Heart left ventricle (tissue), 16 donors: ENCODE measurements at regions of chr14 and their contacts with region 1.

Region 1: DNA sequence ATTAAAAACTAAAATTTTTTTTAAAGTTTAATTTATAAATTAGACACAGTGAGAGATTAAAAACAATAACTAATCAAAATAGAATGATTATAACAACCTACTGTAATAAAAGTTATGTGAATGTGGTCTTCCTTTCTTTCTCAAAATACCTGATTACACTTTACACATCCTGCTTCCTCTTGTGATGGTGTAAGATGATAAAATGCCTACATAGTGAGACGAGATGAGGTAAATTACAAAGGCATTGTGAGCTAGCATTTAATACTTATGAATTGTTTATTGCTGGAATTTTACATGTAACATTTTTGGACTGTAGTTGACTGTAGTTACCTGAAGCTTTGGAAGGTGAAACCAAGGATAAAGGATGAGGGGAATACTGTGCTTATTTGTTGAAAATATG is 94.2 kb upstream of the CLEC14A start:
- DNase-seq: no peak
- ATAC-seq: no peak
- H3K4me3 ChIP-seq: no peak overlapping the region
- H3K27ac ChIP-seq: no peak overlapping the region
- H3K4me1 ChIP-seq: no peaks in the 10 kb centered on the region
- H3K27me3 ChIP-seq: no peaks in the 10 kb centered on the region
- CTCF ChIP-seq: no peak
- POLR2A ChIP-seq: no peak

Region 2: DNA sequence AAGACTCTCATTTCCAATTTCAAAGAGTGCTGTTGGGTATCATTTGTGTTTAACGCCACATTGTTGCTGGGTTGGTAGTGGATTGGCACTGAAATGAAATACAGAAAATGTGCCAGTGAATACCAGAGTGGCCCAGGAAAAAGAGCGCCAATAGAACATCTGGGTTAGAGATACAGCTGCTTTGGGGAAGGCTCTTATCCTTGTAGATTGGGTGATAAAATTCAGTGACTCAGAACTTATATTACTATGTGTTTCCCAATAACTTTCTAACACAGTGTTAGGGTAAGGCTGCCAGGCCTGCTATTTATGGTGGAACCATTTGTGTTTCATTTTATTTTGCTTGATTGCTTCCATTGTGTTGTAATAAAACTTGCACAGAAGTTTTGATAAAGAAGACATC is 310.6 kb before region 1 on chr14:
- intact Hi-C with region 1: no loop called
- DNase-seq: no peak
- ATAC-seq: no peak
- H3K4me3 ChIP-seq: no peak overlapping the region
- H3K27ac ChIP-seq: no peak overlapping the region
- H3K4me1 ChIP-seq: no peaks in the 10 kb centered on the region
- H3K27me3 ChIP-seq: no peaks in the 10 kb centered on the region
- CTCF ChIP-seq: no peak
- POLR2A ChIP-seq: no peak

Region 3: DNA sequence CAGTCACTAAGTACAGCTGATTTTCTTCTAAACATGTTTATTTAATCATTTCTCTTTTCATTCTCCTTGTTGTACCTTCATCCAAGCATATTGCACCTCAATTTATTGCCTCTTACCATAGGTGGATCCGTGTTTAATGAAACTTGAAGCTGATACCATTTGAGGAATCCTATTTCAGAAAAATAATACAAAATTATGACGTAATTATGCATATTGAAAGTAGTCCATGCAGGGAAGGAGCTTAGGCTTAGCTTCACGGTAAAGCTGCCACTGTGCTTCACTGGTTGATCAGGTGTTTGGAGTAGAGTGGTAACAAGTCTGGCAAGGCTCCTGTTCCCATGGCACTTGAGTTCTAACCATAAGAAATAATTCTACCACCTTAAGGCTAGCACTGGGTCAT is 33.2 kb before region 1 on chr14:
- intact Hi-C with region 1: loop called in 1 of 10 experiments (anchors 5 kb)
- DNase-seq: no peak
- ATAC-seq: no peak
- H3K4me3 ChIP-seq: no peak overlapping the region
- H3K27ac ChIP-seq: no peak overlapping the region
- H3K4me1 ChIP-seq: peaks cover 0 to 4% (median 0%) of the 10 kb centered on the region in 12 donors
- H3K27me3 ChIP-seq: no peaks in the 10 kb centered on the region
- CTCF ChIP-seq: no peak
- POLR2A ChIP-seq: no peak

Region 4: GRCh38 chr14:38567703-38568102 is 217.6 kb after region 1 on chr14:
- intact Hi-C with region 1: no loop called
- DNase-seq: no peak
- ATAC-seq: no peak
- H3K4me3 ChIP-seq: no peak overlapping the region
- H3K27ac ChIP-seq: no peak overlapping the region
- H3K4me1 ChIP-seq: no peaks in the 10 kb centered on the region
- H3K27me3 ChIP-seq: no peaks in the 10 kb centered on the region
- CTCF ChIP-seq: no peak
- POLR2A ChIP-seq: no peak